ENCODE measurements at regions of chr13 and their contacts with region 1.

Region 1: GRCh38 chr13:44470638-44471562 is 97.3 kb downstream of the SERP2 start:
- DNase-seq: peak; percentile 43
- ATAC-seq: no peak
- H3K4me3 ChIP-seq: no peak overlapping the region
- H3K4me3 Mint-ChIP-seq: no peak overlapping the region
- H3K27ac ChIP-seq: no peak overlapping the region
- H3K27ac Mint-ChIP-seq: no peak overlapping the region
- H3K4me1 ChIP-seq: no peaks in the 10 kb centered on the region
- H3K4me1 Mint-ChIP-seq: no peaks in the 10 kb centered on the region
- H3K27me3 ChIP-seq: no peaks in the 10 kb centered on the region
- H3K27me3 Mint-ChIP-seq: no peaks in the 10 kb centered on the region
- CTCF ChIP-seq: peak; percentile 75

Region 2: DNA sequence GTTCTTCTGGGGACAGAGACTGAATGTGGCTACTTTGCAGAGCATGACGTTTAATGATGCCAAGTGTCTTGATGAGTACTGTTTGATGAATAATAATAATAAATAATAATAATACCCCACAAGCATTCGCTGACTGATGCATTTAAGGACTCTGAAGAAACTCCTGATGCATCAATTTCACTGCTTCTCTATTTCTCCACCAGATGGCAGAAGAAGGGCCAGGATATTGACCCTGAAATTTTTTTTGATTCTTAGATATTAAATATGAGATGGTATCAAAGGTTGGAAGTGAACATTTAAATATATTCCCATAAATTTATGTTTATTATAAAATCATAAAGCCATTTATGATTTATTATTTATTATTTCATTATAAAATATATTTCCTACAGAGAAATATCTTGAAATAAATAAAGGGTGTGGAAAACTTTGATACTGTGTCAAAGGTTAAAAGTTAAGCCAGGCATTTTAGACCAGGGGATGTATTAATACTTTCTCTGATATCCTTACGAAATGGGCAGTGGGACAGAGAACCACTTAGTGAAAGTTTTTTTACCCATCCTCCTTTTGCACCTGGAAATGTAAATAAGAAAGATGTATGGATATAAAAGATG is 420.3 kb before region 1 on chr13:
- CTCF ChIA-PET with region 1: interaction called, 6 read pairs
- POLR2A ChIA-PET with region 1: no interaction called
- intact Hi-C with region 1: loop called (anchors 1 kb)
- DNase-seq: peak; percentile 50
- ATAC-seq: peak; percentile 31
- H3K4me3 ChIP-seq: no peak overlapping the region
- H3K4me3 Mint-ChIP-seq: no peak overlapping the region
- H3K27ac ChIP-seq: no peak overlapping the region
- H3K27ac Mint-ChIP-seq: no peak overlapping the region
- H3K4me1 ChIP-seq: no peaks in the 10 kb centered on the region
- H3K4me1 Mint-ChIP-seq: no peaks in the 10 kb centered on the region
- H3K27me3 ChIP-seq: peaks cover 0 to 4% (median 2%) of the 10 kb centered on the region in 4 experiments
- H3K27me3 Mint-ChIP-seq: peaks cover 46% of the 10 kb centered on the region
- CTCF ChIP-seq: peak; percentile 91

Region 3: DNA sequence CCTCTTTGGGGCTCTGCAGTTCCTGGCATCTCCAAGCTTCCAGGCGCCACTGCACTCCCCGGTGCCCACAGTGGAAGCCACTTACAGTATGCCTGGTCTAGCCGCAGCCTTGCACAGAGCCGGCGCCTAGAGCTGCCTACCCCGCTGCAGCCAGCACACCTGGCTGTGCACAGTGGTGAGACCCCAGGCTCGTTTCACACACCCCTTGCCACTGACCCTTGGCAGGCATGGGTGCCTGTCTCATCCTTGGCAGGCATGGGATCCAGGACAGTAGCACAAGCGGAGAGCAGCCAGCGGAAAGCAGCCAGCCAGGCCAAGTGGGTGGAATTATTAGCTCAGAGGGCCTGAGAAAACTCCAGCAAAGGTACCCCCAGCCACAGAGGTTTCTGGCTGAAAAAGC is 11.2 kb before region 1 on chr13:
- CTCF ChIA-PET with region 1: interaction called, 10 read pairs
- POLR2A ChIA-PET with region 1: no interaction called
- intact Hi-C with region 1: no loop called
- DNase-seq: no peak
- ATAC-seq: no peak
- H3K4me3 ChIP-seq: no peak overlapping the region
- H3K4me3 Mint-ChIP-seq: no peak overlapping the region
- H3K27ac ChIP-seq: no peak overlapping the region
- H3K27ac Mint-ChIP-seq: no peak overlapping the region
- H3K4me1 ChIP-seq: no peaks in the 10 kb centered on the region
- H3K4me1 Mint-ChIP-seq: no peaks in the 10 kb centered on the region
- H3K27me3 ChIP-seq: no peaks in the 10 kb centered on the region
- H3K27me3 Mint-ChIP-seq: no peaks in the 10 kb centered on the region
- CTCF ChIP-seq: no peak